CD4-positive, alpha-beta memory T cell (primary cell): ENCODE measurements at regions of chr12 and their contacts with region 1.

Region 1: DNA sequence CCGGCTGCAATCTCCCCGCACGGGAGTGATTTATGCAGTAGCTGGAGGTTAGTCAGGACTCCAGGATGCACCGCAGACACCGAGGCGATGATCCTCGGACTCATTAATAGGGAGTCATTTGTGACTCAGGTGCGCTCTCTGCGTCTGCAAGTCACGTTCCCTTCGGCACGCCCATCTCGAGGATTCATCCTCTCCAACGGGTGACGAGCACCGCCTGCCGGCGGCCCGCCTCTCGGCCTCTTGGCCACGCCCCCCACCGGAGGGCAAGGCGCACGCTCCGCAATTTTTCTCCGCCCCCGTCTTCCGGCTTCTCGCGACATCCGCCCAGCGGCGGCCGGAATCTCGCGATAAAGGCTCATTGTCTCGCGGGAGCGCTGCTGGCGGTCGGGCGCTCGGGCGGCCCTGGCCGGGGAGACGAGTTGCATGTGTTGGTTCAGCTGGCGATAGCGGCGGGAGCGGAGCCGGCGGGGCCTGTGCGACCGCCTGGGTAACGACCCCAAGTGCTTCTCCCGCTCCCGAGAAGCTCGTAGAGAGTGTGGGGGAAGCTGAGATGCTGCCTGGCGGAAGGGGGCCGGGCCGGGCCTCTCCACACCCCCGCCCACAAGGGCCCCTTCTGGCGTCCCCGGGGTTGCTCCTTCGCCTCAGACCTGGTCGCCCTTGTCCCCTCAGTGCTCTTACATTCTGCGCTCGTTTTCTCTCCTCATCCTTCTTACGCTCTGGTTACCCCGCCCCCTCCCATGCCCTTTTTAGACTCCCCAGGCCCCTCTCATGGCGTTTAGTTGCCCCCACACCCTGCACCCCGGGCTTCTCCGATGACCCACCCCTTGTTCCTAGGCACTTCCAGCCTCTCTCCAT is at the start of gene DENR:
- DNase-seq: peak; percentile 99 to 100 (median 99)
- H3K4me3 ChIP-seq: peak within 1 kb of the TSS; percentile 64 to 77
- H3K4me3 Mint-ChIP-seq: peak within 1 kb of the TSS; percentile 93 to 97 (median 94)
- H3K27ac ChIP-seq: peak within 1 kb of the TSS; percentile 87
- H3K27ac Mint-ChIP-seq: peak within 1 kb of the TSS; percentile 90 to 99 (median 97)
- H3K4me1 ChIP-seq: peaks cover 19% of the 10 kb centered on the region
- H3K4me1 Mint-ChIP-seq: peaks cover 35 to 60% (median 47%) of the 10 kb centered on the region in 4 donors
- H3K27me3 ChIP-seq: no peaks in the 10 kb centered on the region
- H3K27me3 Mint-ChIP-seq: no peaks in the 10 kb centered on the region
- total RNA-seq, gene DENR: 47.8 to 49.1 TPM

Region 2: GRCh38 chr12:122526683-122527477 is 225.8 kb before region 1 on chr12 and contains the starts of genes KNTC1 and RSRC2:
- CTCF ChIA-PET with region 1: no interaction called
- POLR2A ChIA-PET with region 1: interaction called, 11 read pairs
- intact Hi-C with region 1: loop called (anchors 1 kb)
- DNase-seq: peak; percentile 98 to 99 (median 99)
- H3K4me3 ChIP-seq: peak within 1 kb of the TSS; percentile 85 to 88
- H3K4me3 Mint-ChIP-seq: no peak within 1 kb of the TSS
- H3K27ac ChIP-seq: peak within 1 kb of the TSS; percentile 98
- H3K27ac Mint-ChIP-seq: no peak within 1 kb of the TSS
- H3K4me1 ChIP-seq: peaks cover 52% of the 10 kb centered on the region
- H3K4me1 Mint-ChIP-seq: peaks cover 22 to 37% (median 30%) of the 10 kb centered on the region in 4 donors
- H3K27me3 ChIP-seq: no peaks in the 10 kb centered on the region
- H3K27me3 Mint-ChIP-seq: no peaks in the 10 kb centered on the region
- total RNA-seq, gene KNTC1: 29.7 to 30.9 TPM
- total RNA-seq, gene RSRC2: 138 to 141 TPM

Region 3: DNA sequence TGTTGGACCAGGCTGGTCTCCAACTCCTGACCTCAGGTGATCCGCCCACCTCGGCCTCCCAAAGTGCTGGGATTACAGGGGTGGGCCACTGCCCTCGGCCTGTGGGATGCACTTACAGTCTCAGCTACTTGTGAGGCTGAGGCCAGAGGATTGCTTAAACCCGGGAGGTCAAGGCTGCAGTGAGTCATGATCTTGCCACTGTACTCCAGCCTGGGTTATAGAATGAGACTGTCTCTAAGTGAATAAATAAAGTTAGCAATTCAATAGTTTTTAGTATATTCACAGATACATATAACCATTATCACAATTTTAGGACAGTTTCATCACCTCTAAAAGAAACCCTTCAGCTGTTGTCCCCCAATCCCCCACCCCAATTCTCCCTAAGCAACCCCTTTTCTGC is 110.7 kb before region 1 on chr12:
- CTCF ChIA-PET with region 1: interaction called, 4 read pairs
- POLR2A ChIA-PET with region 1: no interaction called
- intact Hi-C with region 1: loop called (anchors 1 kb)
- DNase-seq: no peak
- H3K4me3 ChIP-seq: no peak overlapping the region
- H3K4me3 Mint-ChIP-seq: no peak overlapping the region
- H3K27ac ChIP-seq: no peak overlapping the region
- H3K27ac Mint-ChIP-seq: no peak overlapping the region
- H3K4me1 ChIP-seq: no peaks in the 10 kb centered on the region
- H3K4me1 Mint-ChIP-seq: peaks cover 3 to 4% (median 4%) of the 10 kb centered on the region in 4 donors
- H3K27me3 ChIP-seq: no peaks in the 10 kb centered on the region
- H3K27me3 Mint-ChIP-seq: peaks cover 0 to under 1% of the 10 kb centered on the region in 2 donors

Region 4: DNA sequence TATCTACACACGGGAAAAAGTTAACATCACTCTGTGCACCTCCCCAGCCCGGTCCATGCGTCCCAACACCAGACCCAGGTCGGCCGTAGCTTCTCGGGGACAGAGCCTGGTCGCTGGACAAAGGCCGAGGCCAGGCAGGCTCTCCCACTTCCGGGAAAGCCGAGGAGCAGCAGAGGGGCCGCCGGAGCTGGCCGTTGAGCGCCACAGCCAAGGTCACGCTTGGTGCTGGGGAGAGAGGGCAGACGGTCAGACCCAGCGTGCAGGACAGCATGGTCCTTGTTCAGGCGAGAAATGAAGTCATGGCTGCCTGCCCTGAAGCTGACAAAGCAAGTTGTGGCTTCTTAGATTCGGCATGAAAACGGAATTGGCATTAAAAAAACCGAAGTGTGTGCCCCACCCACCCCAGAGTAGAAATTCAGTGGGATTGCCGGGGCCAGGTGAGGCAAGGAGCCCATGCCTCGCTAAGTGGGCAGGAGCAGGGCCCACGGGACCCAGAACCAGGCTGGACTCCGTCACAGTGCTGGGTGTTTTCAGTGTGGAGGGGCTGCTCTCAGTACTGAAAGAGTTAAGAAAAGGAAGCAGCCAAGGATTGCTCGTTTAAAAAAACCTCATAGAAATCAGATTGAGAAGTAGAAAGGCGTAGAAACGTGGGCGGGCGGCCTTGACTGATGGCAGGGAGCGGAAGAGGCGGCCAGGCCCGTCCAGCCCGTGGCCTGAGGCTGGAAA is 232.1 kb after region 1 on chr12:
- CTCF ChIA-PET with region 1: no interaction called
- POLR2A ChIA-PET with region 1: no interaction called
- intact Hi-C with region 1: no loop called
- DNase-seq: no peak
- H3K4me3 ChIP-seq: no peak overlapping the region
- H3K4me3 Mint-ChIP-seq: peak overlapping the region in 1 of 8 donors; percentile 24
- H3K27ac ChIP-seq: no peak overlapping the region
- H3K27ac Mint-ChIP-seq: peak overlapping the region; percentile 18 to 82 (median 64)
- H3K4me1 ChIP-seq: peaks cover 39% of the 10 kb centered on the region
- H3K4me1 Mint-ChIP-seq: peaks cover 15 to 42% (median 29%) of the 10 kb centered on the region in 4 donors
- H3K27me3 ChIP-seq: no peaks in the 10 kb centered on the region
- H3K27me3 Mint-ChIP-seq: no peaks in the 10 kb centered on the region